HAP-1 (cell line): ENCODE measurements at regions of chr6 and their contacts with region 1.

Region 1: GRCh38 chr6:85678602-85679444 is 36.1 kb upstream of the SYNCRIP start:
- DNase-seq: peak; percentile 91 to 96
- H3K4me3 ChIP-seq: peak overlapping the region; percentile 96
- H3K4me1 ChIP-seq: peaks cover 33% of the 10 kb centered on the region
- H3K27me3 ChIP-seq: no peaks in the 10 kb centered on the region

Region 2: DNA sequence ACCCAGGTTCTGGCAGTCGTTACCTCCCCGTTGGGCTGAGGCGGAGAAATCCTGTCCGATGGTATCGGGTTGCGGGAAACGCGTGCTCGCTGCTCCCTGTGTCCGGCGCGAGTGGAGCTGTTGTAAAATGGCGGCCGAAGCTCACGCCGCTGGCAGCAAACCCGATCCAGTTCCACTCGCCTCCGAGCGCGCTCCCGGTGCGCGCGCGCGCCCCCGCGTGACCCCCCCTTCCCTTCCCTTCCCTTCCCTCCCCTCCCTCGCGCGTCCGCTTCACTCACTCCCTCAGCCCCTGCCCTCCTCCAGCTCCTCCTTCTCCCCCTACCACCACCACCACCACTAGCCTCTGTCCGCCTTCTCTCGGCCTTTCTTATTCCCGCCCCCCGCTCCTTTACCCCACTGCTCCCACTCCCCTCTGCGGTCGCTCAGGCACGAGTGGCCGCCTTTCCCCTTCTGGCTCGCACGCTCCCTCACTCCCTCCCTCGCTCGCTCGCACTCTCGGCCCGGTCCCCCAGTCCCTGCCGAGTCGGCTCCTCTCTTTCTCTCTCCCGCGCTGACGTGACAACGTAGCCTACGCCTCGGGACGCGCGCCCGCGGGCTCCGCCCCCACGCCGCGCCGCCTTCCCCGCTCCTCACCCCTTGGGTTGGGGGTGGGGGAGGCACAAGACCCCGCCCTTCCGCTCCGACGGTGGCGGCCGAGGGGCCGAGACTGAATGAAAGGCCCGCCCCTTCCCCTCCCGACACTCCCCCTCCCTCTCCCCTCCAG is 35.9 kb before region 1 on chr6 and contains the start of gene SYNCRIP:
- in situ Hi-C with region 1: loop called (anchors 5 kb)
- DNase-seq: peak; percentile 96 to 99
- H3K4me3 ChIP-seq: peak within 1 kb of the TSS; percentile 99
- H3K4me1 ChIP-seq: peaks cover 29% of the 10 kb centered on the region
- H3K27me3 ChIP-seq: no peaks in the 10 kb centered on the region; the same call in 1 of the 2 replicates

Region 3: GRCh38 chr6:85756982-85757381 is 78.2 kb after region 1 on chr6:
- in situ Hi-C with region 1: no loop called
- DNase-seq: peak in 1 of 2 experiments; percentile 9
- H3K4me3 ChIP-seq: no peak overlapping the region
- H3K4me1 ChIP-seq: no peaks in the 10 kb centered on the region
- H3K27me3 ChIP-seq: 0 out of 2 replicates have a peak, but pooled peaks cover 5% of the 10 kb centered on the region